ENCODE measurements at regions of chr2 and their contacts with region 1.

Region 1: DNA sequence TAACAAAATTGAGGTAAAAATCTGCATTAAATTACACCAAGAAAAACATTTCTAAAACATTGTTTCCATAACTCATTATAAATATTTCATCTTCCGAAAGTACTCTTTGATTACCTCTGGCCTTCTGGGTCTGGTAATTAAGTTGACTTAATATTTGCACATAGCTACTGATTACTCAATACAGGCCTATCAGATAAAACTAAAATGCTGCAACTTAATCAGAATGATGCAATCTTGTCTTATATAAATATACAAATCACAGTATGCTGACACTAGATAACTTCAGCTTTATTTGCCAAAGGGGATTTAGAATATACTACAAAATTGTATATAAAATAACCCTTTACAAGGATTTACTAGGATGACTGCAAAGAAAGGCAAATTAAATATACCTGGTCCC is 49.3 kb downstream of the SLC35F5 start:
- DNase-seq: no peak
- ATAC-seq: no peak
- H3K4me3 ChIP-seq: no peak overlapping the region
- H3K27ac ChIP-seq: no peak overlapping the region
- H3K4me1 ChIP-seq: no peaks in the 10 kb centered on the region
- H3K27me3 ChIP-seq: no peaks in the 10 kb centered on the region
- CTCF ChIP-seq: no peak
- EP300 ChIP-seq: no peak
- POLR2A ChIP-seq: no peak
- RAD21 ChIP-seq: no peak

Region 2: DNA sequence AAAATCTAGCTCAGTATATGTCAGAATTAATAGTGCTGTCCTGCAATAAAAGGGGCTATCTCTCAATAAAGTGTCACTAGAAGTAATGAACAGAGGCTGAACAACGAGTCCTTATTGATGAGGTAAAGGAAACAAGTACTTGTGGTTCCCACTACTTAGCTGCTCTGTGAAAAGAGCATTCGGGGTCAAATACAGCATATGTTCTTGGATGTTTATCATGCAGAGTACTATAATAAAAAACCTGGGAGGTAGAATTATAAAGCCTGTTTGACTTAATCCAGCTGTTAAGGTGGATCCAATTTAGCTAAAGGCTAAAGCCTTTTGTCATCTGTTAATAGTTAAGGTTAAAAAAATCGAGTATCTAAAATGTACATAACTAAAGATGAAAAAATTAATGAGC is 16.9 kb after region 1 on chr2:
- CTCF ChIA-PET with region 1: interaction called, 5 read pairs
- POLR2A ChIA-PET with region 1: no interaction called
- RAD21 ChIA-PET with region 1: no interaction called
- SMC1A ChIA-PET with region 1: interaction called, 11 read pairs
- in situ Hi-C with region 1: no loop called
- intact Hi-C with region 1: no loop called
- DNase-seq: no peak
- ATAC-seq: no peak
- H3K4me3 ChIP-seq: no peak overlapping the region
- H3K27ac ChIP-seq: no peak overlapping the region
- H3K4me1 ChIP-seq: no peaks in the 10 kb centered on the region
- H3K27me3 ChIP-seq: no peaks in the 10 kb centered on the region
- CTCF ChIP-seq: no peak
- EP300 ChIP-seq: no peak
- POLR2A ChIP-seq: no peak
- RAD21 ChIP-seq: no peak

Region 3: GRCh38 chr2:113776949-113777348 is 69.8 kb after region 1 on chr2:
- CTCF ChIA-PET with region 1: no interaction called
- POLR2A ChIA-PET with region 1: no interaction called
- RAD21 ChIA-PET with region 1: no interaction called
- SMC1A ChIA-PET with region 1: no interaction called
- in situ Hi-C with region 1: no loop called
- intact Hi-C with region 1: no loop called
- DNase-seq: no peak
- ATAC-seq: no peak
- H3K4me3 ChIP-seq: no peak overlapping the region
- H3K27ac ChIP-seq: no peak overlapping the region
- H3K4me1 ChIP-seq: no peaks in the 10 kb centered on the region
- H3K27me3 ChIP-seq: no peaks in the 10 kb centered on the region
- CTCF ChIP-seq: no peak
- EP300 ChIP-seq: no peak
- POLR2A ChIP-seq: no peak
- RAD21 ChIP-seq: no peak

Region 4: DNA sequence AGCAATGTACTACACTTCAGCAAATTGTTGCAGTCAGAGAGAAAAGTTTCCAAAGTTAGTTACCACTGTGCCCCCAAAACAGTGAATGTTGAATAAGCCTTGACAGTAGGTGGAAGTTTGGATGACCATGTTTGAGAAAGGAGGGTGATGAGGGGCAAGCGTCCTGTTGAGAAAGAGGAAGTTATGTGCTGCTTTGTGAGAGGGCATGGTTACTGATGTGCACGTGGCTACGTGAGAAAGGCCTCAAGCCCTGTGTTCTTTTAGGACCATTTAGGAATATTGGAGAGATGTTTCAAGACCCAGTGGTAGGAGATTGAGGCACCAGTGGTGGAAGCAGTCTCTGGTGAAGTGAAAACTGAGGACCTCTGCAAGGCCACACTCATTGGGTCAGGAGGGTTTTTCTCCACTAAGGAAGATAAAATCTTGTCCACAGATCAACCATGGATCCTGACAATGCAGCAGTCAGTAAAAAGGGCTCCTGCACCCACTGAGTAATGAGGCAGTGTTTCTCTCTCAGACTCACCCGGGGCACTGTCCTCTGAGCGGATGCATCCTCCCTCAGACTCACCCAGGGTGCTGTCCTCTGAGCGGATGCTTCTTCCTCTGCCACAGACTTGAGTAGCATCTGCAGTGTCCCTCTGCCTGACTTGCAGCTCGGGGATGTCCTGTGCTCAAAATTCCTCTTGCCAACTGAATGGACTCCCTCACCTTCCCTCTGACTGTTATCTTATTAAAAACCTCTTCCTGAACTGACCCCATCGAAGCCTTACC is 148.0 kb after region 1 on chr2:
- CTCF ChIA-PET with region 1: no interaction called
- POLR2A ChIA-PET with region 1: no interaction called
- RAD21 ChIA-PET with region 1: no interaction called
- SMC1A ChIA-PET with region 1: no interaction called
- in situ Hi-C with region 1: no loop called
- intact Hi-C with region 1: no loop called
- DNase-seq: no peak
- ATAC-seq: peak; percentile 52
- H3K4me3 ChIP-seq: no peak overlapping the region
- H3K27ac ChIP-seq: no peak overlapping the region; the same call in 1 of the 2 replicates
- H3K4me1 ChIP-seq: peaks cover 26% of the 10 kb centered on the region
- H3K27me3 ChIP-seq: no peaks in the 10 kb centered on the region
- CTCF ChIP-seq: no peak
- EP300 ChIP-seq: no peak
- POLR2A ChIP-seq: no peak
- RAD21 ChIP-seq: no peak

Measured in GM12878 (cell line).